ENCODE measurements at regions of chr4 and their contacts with region 1.

Region 1: GRCh38 chr4:142656178-142656577 is 189.9 kb downstream of the INPP4B start:
- DNase-seq: peak in 10 of 14 experiments; percentile 1 to 31 (median 8)
- ATAC-seq: no peak
- H3K4me3 ChIP-seq: no peak overlapping the region
- H3K4me3 Mint-ChIP-seq: no peak overlapping the region
- H3K27ac ChIP-seq: no peak overlapping the region
- H3K27ac Mint-ChIP-seq: no peak overlapping the region
- H3K4me1 ChIP-seq: no peaks in the 10 kb centered on the region
- H3K4me1 Mint-ChIP-seq: no peaks in the 10 kb centered on the region
- H3K27me3 ChIP-seq: no peaks in the 10 kb centered on the region
- H3K27me3 Mint-ChIP-seq: no peaks in the 10 kb centered on the region
- CTCF ChIP-seq: no peak

Region 2: DNA sequence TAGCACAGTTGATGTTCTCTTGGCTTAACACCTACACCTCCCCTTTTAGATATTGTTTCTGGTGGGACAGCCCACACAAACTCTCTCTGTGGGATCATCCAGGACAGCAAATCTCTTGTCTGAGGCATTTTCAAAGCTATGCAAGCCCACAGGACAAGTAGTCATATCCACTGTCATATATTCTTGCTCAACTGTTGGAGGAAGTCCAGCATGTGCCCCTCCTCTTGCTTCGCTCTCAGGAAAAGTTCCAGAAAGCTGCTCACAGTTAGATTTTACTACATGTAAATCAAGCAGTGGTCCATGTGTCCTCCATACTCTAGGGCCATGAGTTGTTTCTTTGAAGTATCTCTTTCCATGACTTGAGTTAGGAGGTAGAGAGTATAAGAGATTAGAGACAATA is 70.8 kb before region 1 on chr4:
- CTCF ChIA-PET with region 1: no interaction called
- POLR2A ChIA-PET with region 1: no interaction called
- intact Hi-C with region 1: no loop called
- DNase-seq: no peak
- ATAC-seq: no peak
- H3K4me3 ChIP-seq: no peak overlapping the region
- H3K4me3 Mint-ChIP-seq: no peak overlapping the region
- H3K27ac ChIP-seq: no peak overlapping the region
- H3K27ac Mint-ChIP-seq: no peak overlapping the region
- H3K4me1 ChIP-seq: no peaks in the 10 kb centered on the region
- H3K4me1 Mint-ChIP-seq: peaks cover 51% of the 10 kb centered on the region
- H3K27me3 ChIP-seq: no peaks in the 10 kb centered on the region
- H3K27me3 Mint-ChIP-seq: no peaks in the 10 kb centered on the region
- CTCF ChIP-seq: no peak

Region 3: DNA sequence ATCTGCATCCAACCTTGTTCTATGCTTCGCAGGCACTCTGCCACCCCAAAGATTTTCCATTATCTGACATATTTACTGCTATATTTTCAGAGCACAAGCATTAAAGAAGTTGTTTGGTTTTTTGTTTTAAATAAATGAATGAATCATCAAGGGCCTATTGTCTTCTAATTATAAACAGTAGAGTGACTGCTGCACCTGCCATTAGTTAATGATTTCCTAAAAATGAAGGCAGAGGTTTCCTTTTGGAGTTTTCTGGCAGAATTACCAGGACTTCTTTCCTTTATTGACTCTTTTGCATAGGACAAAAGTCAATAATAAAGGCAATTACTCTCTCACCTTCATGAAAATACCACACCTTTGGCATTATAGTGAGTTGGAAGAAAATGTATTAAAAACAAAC is 48.2 kb before region 1 on chr4:
- CTCF ChIA-PET with region 1: no interaction called
- POLR2A ChIA-PET with region 1: no interaction called
- intact Hi-C with region 1: loop called in 1 of 2 experiments (anchors 5 kb)
- DNase-seq: no peak
- ATAC-seq: no peak
- H3K4me3 ChIP-seq: no peak overlapping the region
- H3K4me3 Mint-ChIP-seq: no peak overlapping the region
- H3K27ac ChIP-seq: no peak overlapping the region
- H3K27ac Mint-ChIP-seq: no peak overlapping the region
- H3K4me1 ChIP-seq: no peaks in the 10 kb centered on the region
- H3K4me1 Mint-ChIP-seq: no peaks in the 10 kb centered on the region
- H3K27me3 ChIP-seq: no peaks in the 10 kb centered on the region
- H3K27me3 Mint-ChIP-seq: no peaks in the 10 kb centered on the region
- CTCF ChIP-seq: no peak

Region 4: GRCh38 chr4:142703694-142704309 is 47.6 kb after region 1 on chr4:
- CTCF ChIA-PET with region 1: no interaction called
- POLR2A ChIA-PET with region 1: interaction called, 3 read pairs
- intact Hi-C with region 1: loop called in 1 of 2 experiments (anchors 5 kb)
- DNase-seq: peak in 10 of 14 experiments; percentile 3 to 82 (median 36)
- ATAC-seq: peak; percentile 79
- H3K4me3 ChIP-seq: peak overlapping the region; percentile 6
- H3K4me3 Mint-ChIP-seq: no peak overlapping the region
- H3K27ac ChIP-seq: peak overlapping the region; percentile 34 to 71
- H3K27ac Mint-ChIP-seq: no peak overlapping the region
- H3K4me1 ChIP-seq: peaks cover 68% of the 10 kb centered on the region
- H3K4me1 Mint-ChIP-seq: peaks cover 31% of the 10 kb centered on the region
- H3K27me3 ChIP-seq: no peaks in the 10 kb centered on the region
- H3K27me3 Mint-ChIP-seq: no peaks in the 10 kb centered on the region
- CTCF ChIP-seq: no peak

Region 5: GRCh38 chr4:143736861-143737260 is 1080.7 kb after region 1 on chr4:
- CTCF ChIA-PET with region 1: no interaction called
- POLR2A ChIA-PET with region 1: no interaction called
- intact Hi-C with region 1: no loop called
- DNase-seq: no peak
- ATAC-seq: no peak
- H3K4me3 ChIP-seq: no peak overlapping the region
- H3K4me3 Mint-ChIP-seq: no peak overlapping the region
- H3K27ac ChIP-seq: no peak overlapping the region
- H3K27ac Mint-ChIP-seq: no peak overlapping the region
- H3K4me1 ChIP-seq: no peaks in the 10 kb centered on the region
- H3K4me1 Mint-ChIP-seq: no peaks in the 10 kb centered on the region
- H3K27me3 ChIP-seq: no peaks in the 10 kb centered on the region
- H3K27me3 Mint-ChIP-seq: no peaks in the 10 kb centered on the region
- CTCF ChIP-seq: no peak